BJ (cell line): ENCODE measurements at regions of chr1 and their contacts with region 1.

Region 1: GRCh38 chr1:203267347-203267846 is 37.9 kb upstream of the BTG2 start:
- DNase-seq: peak; percentile 62
- H3K4me3 ChIP-seq: peak overlapping the region; percentile 56
- H3K27me3 ChIP-seq: peaks cover 2% of the 10 kb centered on the region; the same call in 1 of the 2 replicates
- CTCF ChIP-seq: peak; percentile 94

Region 2: DNA sequence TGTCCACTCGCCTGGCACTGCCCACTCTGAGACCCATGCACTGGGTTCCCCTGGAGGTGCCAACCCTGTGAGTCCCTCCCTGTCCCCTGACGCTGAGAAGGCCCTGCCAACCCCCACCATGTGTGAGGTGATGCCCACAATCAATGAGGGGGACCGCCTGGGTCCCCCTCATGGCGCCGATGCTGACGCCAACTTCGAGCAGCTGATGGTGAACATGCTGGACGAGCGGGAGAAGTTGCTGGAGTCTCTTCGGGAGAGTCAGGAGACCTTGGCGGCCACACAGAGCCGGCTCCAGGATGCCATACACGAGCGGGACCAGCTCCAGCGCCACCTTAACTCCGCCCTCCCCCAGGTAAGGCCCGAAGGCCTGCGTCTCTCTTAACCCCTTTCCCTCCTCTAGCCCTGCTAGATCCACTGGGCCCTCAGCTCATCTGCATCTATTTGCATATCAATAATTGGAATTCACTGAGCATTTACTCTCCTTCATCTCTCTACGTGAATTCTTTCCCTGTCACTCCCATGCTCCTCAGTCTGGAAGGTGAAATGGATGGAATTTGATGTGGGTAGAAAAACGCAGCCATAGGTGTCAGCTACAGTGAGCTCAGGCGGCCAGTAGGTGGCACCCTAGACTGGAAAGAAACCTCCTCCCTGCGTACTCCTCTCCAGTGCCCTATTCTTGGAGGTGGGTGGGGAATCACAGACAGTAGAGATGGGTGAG is 228.3 kb before region 1 on chr1:
- CTCF ChIA-PET with region 1: interaction called, 74 read pairs
- POLR2A ChIA-PET with region 1: no interaction called
- DNase-seq: no peak
- H3K4me3 ChIP-seq: no peak overlapping the region
- H3K27me3 ChIP-seq: no peaks in the 10 kb centered on the region
- CTCF ChIP-seq: peak; percentile 91

Region 3: GRCh38 chr1:203207751-203208150 is 59.6 kb before region 1 on chr1:
- CTCF ChIA-PET with region 1: interaction called, 15 read pairs
- POLR2A ChIA-PET with region 1: no interaction called
- DNase-seq: no peak
- H3K4me3 ChIP-seq: no peak overlapping the region
- H3K27me3 ChIP-seq: no peaks in the 10 kb centered on the region
- CTCF ChIP-seq: no peak

Region 4: DNA sequence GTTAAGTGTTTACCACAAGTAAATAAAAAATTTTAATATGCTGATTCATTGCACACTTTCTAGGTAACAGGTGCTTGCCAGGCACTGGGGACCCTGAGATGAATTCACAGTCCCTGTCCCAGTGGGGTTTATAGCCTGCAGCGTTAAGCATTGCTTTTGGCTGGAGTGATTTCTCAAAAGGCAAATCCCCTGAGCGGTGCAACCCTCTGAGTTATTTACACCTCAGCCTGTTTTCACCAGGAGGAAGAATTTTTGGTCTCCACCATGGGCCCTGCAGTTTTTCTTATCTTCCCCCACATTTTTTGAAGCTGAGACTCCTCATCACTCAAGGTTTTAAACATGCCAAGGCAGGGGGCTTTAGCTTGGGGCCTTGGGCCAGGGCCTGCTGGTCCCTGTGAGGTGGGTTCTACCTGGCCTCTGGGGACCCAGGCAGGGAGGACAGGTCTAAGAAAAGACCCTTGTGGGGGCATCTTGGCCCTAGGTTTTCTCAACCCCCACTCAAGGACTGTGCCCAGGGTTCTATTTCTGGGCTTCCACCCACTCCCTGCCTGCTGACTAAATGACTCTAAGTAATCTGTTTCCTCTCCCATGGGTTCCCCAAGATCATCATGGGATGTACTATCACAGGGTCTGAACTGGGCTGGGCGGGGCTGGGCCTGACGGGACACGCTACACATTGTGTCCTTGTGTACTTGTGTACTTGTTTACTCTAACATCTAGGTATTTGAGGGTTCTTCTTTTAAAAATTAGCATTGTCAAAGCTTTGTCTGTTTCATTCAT is 27.7 kb before region 1 on chr1:
- CTCF ChIA-PET with region 1: interaction called, 13 read pairs
- POLR2A ChIA-PET with region 1: no interaction called
- DNase-seq: no peak
- H3K4me3 ChIP-seq: no peak overlapping the region
- H3K27me3 ChIP-seq: no peaks in the 10 kb centered on the region; the same call in none of the 2 replicates
- CTCF ChIP-seq: no peak

Region 5: DNA sequence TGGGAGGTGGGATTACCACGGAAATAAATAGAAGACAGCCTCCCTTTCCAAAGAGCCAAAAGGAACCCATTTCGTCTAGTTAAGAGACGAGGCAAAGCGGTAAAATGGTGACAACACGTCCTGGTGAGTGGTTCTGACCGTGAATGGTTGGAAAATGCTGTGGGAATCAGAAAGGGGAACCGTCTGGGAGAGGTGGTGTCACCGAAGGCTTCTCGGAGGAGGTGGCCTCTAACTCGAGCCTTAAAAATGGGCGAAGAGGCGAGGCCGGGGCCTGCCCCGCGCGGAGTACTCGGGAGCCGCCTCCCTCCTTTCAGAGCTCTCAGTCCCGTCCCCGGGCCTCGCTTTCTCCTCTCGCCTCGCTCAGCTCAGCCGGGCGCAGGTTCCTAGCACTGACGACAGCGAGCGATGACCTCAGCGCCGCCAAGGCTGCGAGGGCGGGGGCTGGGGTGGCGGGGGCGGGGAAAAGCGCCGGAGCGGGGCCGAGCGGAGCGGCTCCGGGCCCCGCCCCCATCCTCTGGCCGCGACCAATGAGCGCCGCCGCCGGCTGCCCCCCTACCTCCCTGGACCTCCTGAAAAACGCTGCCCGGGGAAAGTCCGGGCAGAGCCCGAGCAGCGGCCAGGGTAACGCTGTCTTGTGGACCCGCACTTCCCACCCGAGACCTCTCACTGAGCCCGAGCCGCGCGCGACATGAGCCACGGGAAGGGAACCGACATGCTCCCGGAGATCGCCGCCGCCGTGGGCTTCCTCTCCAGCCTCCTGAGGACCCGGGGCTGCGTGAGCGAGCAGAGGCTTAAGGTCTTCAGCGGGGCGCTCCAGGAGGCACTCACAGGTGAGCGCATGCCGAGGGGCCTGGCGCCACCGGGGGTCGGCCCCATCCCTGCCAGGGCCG is 37.8 kb after region 1 on chr1 and contains the start of gene BTG2:
- CTCF ChIA-PET with region 1: interaction called, 23 read pairs
- POLR2A ChIA-PET with region 1: no interaction called
- DNase-seq: peak; percentile 31
- H3K4me3 ChIP-seq: peak within 1 kb of the TSS; percentile 93
- H3K27me3 ChIP-seq: no peaks in the 10 kb centered on the region; the same call in 1 of the 2 replicates
- CTCF ChIP-seq: no peak
- polyA plus RNA-seq, gene BTG2: 22.8 and 23.7 TPM in 2 replicates

Region 6: GRCh38 chr1:203368624-203369451 is 101.4 kb after region 1 on chr1:
- CTCF ChIA-PET with region 1: interaction called, 10 read pairs
- POLR2A ChIA-PET with region 1: no interaction called
- DNase-seq: peak; percentile 61
- H3K4me3 ChIP-seq: no peak overlapping the region
- H3K27me3 ChIP-seq: peaks cover 7% of the 10 kb centered on the region
- CTCF ChIP-seq: peak; percentile 59